Breast epithelium (tissue), 4 donors: ENCODE measurements at regions of chr3 and their contacts with region 1.

Region 1: GRCh38 chr3:134373994-134374790 is at the start of gene AMOTL2:
- DNase-seq: peak; percentile 85 to 92
- H3K4me3 ChIP-seq: peak within 1 kb of the TSS; percentile 76 to 89 (median 80)
- H3K27ac ChIP-seq: peak within 1 kb of the TSS; percentile 97 to 100
- H3K4me1 ChIP-seq: peaks cover 15 to 16% of the 10 kb centered on the region in 2 donors
- H3K27me3 ChIP-seq: no peaks in the 10 kb centered on the region
- CTCF ChIP-seq: no peak
- POLR2A ChIP-seq: peak; percentile 88
- total RNA-seq, gene AMOTL2: 78.3 to 281 (median 83.2) TPM

Region 2: DNA sequence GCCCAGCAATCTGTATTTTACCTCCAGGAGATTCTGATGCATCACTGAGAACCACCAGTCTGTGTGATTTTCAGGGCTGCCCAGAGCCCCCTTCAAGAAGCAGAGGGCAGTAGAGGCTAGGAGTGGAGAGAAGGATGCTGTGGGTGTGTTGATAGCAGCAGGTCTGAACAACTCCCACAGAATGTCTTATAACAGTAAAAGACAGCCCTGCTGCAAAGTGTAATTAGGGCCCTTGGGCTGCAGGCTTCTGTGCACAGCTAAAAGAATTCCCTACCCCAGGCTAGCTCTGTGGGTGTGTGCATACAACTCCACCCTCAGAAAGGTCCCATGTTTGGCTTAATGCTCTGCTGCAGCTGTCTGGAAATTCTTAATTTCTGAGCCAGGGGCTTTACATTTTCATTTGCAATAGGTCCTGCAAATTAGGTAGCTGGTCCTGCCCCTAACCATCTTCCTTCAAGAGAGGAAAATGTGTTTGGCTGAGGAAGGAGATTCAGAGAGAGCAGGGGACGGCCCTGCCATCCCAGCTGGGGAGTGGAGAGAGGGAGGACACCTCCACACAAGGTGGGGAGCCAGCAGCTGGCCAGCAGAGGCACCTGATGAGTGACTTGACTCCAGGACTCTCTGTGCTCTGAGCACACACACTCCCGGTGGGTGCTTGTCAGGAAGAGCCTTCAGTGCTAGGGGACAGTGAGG is 435.3 kb before region 1 on chr3:
- intact Hi-C with region 1: loop called (anchors 5 kb)
- DNase-seq: peak in 1 of 2 donors; percentile 27
- H3K4me3 ChIP-seq: no peak overlapping the region
- H3K27ac ChIP-seq: peak overlapping the region; percentile 78 to 88
- H3K4me1 ChIP-seq: peaks cover 3 to 23% of the 10 kb centered on the region in 2 donors
- H3K27me3 ChIP-seq: no peaks in the 10 kb centered on the region
- CTCF ChIP-seq: no peak
- POLR2A ChIP-seq: no peak

Region 3: DNA sequence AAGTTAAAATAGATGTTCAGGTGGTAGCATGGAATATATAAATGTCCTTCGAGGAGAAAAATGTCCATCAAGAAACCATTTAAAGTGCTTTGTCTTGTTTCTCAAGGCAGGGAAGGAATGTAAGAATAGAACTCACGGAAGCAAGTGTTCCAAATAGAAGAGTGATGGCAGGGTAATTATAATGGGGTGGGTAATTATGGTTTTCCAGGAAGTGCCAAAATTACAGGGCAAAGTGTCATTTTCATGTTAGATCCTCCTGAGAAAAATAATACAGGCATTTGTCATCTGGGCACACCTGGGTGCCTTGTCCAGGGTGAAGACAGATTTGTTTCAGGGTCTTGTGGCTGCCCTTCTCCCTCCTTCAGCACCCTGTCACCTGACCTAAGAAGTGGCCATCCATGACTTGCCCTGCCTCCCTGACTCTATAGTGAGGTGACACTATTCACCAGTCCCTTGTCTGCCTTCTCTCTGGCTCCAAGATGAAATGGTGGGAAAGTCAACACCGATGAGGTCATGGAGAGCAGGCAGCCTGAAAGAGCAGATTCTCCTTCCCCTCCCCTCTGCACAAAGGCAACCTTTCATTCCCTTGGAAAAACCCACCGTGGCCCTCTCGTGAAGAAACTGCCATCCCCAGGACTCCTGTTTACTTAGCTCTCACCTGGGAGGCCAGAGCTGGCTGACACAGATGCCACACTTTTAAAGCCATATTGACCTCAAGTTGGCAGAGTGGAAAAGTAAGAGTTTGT is 45.2 kb after region 1 on chr3:
- intact Hi-C with region 1: no loop called
- DNase-seq: no peak
- H3K4me3 ChIP-seq: no peak overlapping the region
- H3K27ac ChIP-seq: no peak overlapping the region
- H3K4me1 ChIP-seq: no peaks in the 10 kb centered on the region
- H3K27me3 ChIP-seq: no peaks in the 10 kb centered on the region
- CTCF ChIP-seq: no peak
- POLR2A ChIP-seq: no peak

Region 4: DNA sequence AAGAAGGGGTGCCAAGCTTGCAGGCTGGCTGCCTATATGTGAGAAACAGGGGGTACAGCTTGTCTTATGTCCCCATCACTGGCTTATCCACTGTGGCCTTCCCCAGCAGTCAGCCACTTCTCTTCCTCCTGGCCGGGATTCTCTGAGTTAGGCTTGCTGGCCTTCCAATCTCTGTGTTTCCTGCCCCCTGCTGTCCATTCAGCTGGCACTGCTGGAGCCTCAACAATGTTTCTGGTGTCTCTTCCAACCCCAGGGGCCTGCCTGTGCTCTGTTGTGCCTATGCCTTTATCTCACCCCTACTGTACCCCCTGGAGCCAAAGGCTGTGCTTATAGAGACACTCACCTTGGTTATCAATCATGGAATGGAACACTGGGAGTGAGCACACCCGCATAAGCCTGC is 75.1 kb after region 1 on chr3:
- intact Hi-C with region 1: loop called (anchors 10 kb)
- DNase-seq: no peak
- H3K4me3 ChIP-seq: no peak overlapping the region
- H3K27ac ChIP-seq: no peak overlapping the region
- H3K4me1 ChIP-seq: peaks cover 0 to 4% of the 10 kb centered on the region in 2 donors
- H3K27me3 ChIP-seq: no peaks in the 10 kb centered on the region
- CTCF ChIP-seq: peak in 2 of 3 donors; percentile 53 to 59
- POLR2A ChIP-seq: no peak

Region 5: GRCh38 chr3:134485718-134486576 is 111.8 kb after region 1 on chr3 and contains the starts of genes ANAPC13 and CEP63:
- intact Hi-C with region 1: loop called (anchors 10 kb)
- DNase-seq: peak; percentile 86 to 94
- H3K4me3 ChIP-seq: peak within 1 kb of the TSS; percentile 64 to 94 (median 84)
- H3K27ac ChIP-seq: peak within 1 kb of the TSS; percentile 96 to 99
- H3K4me1 ChIP-seq: peaks cover 0 to 3% of the 10 kb centered on the region in 2 donors
- H3K27me3 ChIP-seq: no peaks in the 10 kb centered on the region
- CTCF ChIP-seq: peak in 1 of 3 donors; percentile 8
- POLR2A ChIP-seq: peak; percentile 29
- total RNA-seq, gene ANAPC13: 56.0 to 68.3 (median 66.1) TPM
- total RNA-seq, gene CEP63: 31.8 to 38.9 (median 33.1) TPM